GM18951 (cell line): ENCODE measurements at regions of chr4 and their contacts with region 1.

Region 1: GRCh38 chr4:25367004-25367621 is 9.9 kb upstream of the ANAPC4 start:
- POLR2A ChIP-seq: no peak

Region 2: DNA sequence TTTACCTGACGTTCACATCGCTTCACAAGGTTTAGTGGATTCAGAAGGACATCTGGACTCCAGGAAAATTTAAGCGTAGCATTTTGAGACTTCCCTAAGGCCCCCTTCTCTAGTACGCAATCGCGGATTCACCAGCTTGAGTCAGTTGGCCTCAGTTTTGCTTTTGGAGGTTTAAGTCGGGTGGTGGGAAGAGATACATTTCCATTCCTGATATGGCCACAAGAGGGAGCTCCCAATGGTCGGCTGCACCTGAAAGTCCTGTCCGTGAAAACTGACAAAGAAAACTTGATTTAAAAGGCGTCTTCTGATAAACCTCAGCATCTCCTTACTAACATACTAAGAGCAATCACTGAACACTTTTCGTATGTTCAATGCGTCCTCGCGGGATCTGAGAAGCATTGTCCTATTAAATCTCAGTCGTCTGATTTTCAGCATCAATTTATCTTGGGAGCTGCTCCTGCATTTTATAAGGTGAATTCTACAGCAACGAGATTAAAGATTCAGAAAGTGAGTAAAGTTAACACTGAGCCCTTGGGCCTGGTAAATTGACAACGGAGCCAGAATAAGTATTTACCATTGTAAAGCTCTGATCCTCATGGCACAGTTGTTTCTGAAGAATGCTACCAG is 386.9 kb before region 1 on chr4:
- in situ Hi-C with region 1: loop called (anchors 25 kb)
- POLR2A ChIP-seq: no peak

Region 3: DNA sequence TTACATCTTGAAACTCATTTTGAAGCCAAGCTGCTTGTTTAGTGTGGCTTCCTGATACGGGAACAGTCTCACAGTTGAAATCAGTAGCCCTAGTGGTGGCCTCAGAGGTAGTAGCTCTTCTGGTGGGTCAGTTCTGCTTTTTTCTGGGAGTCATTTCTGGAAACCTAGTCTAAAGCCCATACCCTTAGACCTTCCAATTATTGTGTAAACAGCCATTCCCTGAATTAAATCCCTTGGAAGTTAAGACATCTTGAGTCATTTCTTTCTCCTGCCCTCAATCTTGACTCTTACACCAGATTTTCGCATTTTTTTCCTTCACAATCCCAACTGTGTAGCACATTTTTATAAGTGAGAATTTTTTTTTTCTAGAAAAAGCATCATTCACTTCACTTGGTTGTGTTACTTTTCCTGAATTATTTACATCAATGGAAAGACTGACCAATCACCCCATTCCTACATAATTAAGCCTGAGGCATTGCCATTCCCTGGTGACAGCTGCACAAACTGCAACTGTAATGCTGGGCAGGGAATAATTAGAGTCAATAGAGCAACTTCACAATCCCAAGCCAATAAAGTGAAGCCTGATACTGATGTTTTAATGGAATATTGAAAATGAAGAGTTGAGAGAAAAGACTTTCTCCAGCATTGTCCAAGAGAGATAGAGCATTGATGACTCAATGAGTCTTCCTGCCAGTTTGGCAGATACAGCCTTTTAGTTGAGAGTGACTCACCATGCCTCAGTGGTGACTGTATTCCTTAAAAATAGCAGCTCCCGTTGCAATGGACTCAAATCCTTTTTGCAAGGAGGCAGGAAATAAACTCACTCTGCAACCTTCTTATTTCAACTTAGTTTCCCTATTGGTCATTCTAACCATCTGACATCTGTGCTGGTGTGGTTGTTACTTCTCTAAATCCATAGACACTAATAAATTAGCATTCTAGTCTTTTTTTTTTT is 193.9 kb before region 1 on chr4:
- in situ Hi-C with region 1: loop called (anchors 10 kb)
- POLR2A ChIP-seq: no peak

Region 4: DNA sequence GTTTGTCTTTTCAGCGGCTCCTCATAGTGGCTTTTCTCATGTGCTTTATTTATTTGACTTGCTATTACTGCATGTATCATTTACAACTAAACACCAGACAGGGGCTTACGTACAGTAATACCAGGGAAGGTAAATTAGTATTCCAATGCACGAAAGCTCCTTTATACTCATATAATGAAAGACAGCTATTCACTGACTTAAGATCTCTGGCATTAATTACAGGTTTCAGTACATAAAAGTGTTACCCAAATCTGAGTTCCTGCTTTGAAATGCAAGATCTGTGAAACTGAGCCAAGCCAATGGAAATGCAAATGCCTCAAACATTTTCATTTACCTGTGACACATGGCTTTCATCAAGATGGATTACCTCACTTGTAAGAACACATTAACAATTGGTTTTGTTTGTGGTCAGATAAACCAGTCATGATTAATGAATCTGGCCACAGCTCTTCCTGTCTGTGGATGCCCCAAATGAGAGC is 117.2 kb after region 1 on chr4:
- in situ Hi-C with region 1: no loop called
- POLR2A ChIP-seq: no peak

Region 5: DNA sequence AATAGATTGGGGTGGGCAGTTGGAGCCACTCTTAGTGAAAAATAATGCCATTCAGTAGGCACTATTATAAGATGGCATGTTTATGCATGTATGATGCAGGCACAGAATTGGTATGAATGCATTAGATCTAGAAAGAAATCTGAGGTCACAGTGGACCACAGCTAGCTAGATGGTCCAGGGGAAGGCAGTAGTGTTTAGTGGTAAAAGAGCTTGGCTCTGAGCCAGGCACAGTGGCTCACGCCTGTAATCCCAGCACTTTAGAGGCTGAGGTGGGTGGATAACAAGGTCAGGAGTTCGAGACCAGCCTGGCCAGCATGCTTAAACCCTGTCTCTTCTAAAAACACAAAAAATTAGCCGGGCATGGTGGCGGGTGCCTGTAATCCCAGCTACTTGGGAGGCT is 245.4 kb after region 1 on chr4:
- in situ Hi-C with region 1: no loop called
- POLR2A ChIP-seq: no peak